HEK293 (cell line): ENCODE measurements at regions of chr22 and their contacts with region 1.

Region 1: DNA sequence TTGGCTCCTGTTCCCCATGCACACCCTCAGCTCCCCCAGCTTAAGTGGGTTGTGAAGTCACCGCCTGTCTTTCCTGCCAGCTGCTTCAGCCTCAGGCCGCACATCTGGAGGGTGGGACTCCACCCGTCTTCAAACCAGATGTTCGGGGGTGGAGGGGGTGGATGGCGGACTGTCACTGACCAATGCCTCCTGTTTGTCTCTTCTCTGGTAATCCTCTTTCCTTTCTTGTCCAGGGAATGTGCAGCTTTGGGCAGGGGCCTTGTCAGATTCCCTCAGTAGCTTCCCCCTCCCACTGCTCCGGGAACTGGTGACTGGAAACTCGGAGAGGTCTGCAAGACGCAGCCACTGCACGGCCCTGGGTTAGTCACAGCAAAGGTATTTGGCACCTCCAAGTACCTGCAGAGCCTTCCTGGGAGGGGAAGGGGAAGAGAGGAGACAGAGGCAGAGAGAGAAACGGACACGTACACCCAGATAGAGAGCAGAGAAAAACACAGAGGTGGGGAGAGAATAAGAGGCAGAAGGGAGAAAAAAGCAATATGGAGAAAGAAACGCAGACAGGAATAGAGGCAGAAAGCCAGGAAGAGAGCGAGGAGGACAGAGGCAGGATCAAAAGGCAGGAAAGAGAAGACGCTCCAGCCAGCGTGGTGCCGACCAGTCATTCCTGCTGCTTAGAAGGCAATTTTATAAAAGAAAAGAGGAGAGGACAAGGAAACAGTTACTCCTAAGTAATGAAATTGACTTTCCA is 56.1 kb upstream of the TIMP3 start:
- H3K4me3 ChIP-seq: no peak overlapping the region
- H3K27ac ChIP-seq: no peak overlapping the region
- H3K4me1 ChIP-seq: no peaks in the 10 kb centered on the region
- CTCF ChIP-seq: no peak

Region 2: GRCh38 chr22:32775957-32776356 is 30.5 kb after region 1 on chr22:
- CTCF ChIA-PET with region 1: no interaction called
- POLR2A ChIA-PET with region 1: interaction called, 13 read pairs
- H3K4me3 ChIP-seq: no peak overlapping the region
- H3K27ac ChIP-seq: no peak overlapping the region
- H3K4me1 ChIP-seq: no peaks in the 10 kb centered on the region
- CTCF ChIP-seq: no peak